ENCODE measurements at regions of chr18 and their contacts with region 1.

Region 1: GRCh38 chr18:48997985-48998831 is 47.4 kb upstream of the SMAD7 start:
- DNase-seq: peak; percentile 35

Region 2: GRCh38 chr18:48951448-48952286 is 46.5 kb before region 1 on chr18:
- CTCF ChIA-PET with region 1: no interaction called
- POLR2A ChIA-PET with region 1: interaction called, 27 read pairs
- DNase-seq: peak; percentile 65

Region 3: DNA sequence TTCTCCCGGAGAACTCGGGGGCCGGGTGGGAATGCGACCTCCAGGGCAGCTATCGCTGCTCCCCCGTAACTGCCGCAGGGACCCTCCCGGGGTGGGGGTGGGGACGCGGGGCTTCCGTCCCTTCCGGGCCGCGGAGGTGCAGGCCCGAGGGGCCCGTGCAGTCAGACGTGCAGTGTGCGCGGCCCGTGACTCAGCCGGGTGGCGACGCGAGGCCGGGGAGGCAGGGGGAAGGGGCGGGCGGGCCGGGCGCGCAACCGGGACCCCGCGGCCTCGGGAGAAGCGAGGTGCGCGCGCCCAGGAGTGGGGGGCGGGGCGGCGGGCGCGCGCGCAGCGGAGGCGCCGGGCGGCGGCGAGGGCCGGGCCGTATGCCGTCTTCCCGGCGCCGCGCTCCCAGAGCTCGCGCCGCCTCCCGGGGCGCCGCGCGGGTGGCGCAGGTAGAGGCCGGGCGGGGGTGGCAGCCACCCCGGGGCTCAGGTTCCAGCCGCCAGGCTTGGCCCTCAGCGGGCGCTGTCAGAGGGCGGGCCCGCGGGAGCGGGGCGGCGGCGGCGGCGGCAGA is 22.5 kb before region 1 on chr18:
- CTCF ChIA-PET with region 1: interaction called, 3 read pairs
- POLR2A ChIA-PET with region 1: interaction called, 10 read pairs
- DNase-seq: peak; percentile 73

Measured in HEK293T (cell line).